ENCODE measurements at regions of chr16 and their contacts with region 1.

Region 1: DNA sequence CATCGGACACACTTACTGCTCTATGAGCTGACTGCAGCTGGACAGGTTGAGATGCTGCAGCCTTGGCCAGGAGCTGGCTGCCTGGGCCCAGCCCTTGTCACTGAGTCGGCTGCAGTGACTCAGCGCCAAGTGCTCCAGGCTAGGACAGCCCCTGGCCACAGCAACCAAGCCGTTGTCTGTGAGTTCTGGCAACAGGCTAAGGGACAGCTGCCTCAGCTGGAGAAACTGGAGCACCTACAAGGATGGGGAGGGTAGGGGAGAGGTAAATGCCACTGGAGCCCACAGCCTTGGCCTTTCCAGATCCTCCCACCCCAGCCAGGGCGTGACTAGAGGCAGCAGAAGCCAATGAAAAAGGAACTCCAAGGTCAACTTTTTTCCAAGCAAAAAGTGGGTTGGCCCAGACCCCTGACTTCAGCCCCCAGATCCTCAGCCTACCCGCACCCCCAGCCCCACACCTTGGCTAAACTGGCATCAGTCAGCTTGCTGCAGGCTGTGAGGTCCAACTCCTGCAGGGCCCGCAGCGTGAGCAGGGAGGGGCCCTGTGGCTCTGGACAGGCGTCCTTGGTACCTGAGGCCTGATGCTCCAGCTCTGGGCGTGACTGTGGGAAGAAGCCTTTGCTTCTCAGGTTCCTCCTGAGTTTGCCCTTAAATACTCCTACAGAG is 9.1 kb downstream of the ELMO3 start:
- DNase-seq: peak; percentile 32 to 53
- ATAC-seq: peak; percentile 49 to 56
- H3K4me3 ChIP-seq: no peak overlapping the region
- H3K27ac ChIP-seq: peak overlapping the region; percentile 38 to 73; a peak in 4 of 6 replicates
- H3K4me1 ChIP-seq: peaks cover 22% of the 10 kb centered on the region
- CTCF ChIP-seq: no peak
- EP300 ChIP-seq: no peak
- POLR2A ChIP-seq: no peak
- RAD21 ChIP-seq: no peak

Region 2: GRCh38 chr16:67191995-67192681 is 15.8 kb before region 1 on chr16 and contains the start of gene E2F4:
- CTCF ChIA-PET with region 1: interaction called, 105 read pairs
- POLR2A ChIA-PET with region 1: no interaction called
- DNase-seq: peak; percentile 90 to 92
- ATAC-seq: peak; percentile 96 to 98
- H3K4me3 ChIP-seq: peak within 1 kb of the TSS; percentile 95
- H3K27ac ChIP-seq: peak within 1 kb of the TSS; percentile 97
- H3K4me1 ChIP-seq: peaks cover 16% of the 10 kb centered on the region
- CTCF ChIP-seq: no peak
- EP300 ChIP-seq: no peak
- POLR2A ChIP-seq: peak; percentile 71
- RAD21 ChIP-seq: no peak
- polyA plus RNA-seq, gene E2F4: 65.1 and 71.8 TPM in 2 replicates

Region 3: DNA sequence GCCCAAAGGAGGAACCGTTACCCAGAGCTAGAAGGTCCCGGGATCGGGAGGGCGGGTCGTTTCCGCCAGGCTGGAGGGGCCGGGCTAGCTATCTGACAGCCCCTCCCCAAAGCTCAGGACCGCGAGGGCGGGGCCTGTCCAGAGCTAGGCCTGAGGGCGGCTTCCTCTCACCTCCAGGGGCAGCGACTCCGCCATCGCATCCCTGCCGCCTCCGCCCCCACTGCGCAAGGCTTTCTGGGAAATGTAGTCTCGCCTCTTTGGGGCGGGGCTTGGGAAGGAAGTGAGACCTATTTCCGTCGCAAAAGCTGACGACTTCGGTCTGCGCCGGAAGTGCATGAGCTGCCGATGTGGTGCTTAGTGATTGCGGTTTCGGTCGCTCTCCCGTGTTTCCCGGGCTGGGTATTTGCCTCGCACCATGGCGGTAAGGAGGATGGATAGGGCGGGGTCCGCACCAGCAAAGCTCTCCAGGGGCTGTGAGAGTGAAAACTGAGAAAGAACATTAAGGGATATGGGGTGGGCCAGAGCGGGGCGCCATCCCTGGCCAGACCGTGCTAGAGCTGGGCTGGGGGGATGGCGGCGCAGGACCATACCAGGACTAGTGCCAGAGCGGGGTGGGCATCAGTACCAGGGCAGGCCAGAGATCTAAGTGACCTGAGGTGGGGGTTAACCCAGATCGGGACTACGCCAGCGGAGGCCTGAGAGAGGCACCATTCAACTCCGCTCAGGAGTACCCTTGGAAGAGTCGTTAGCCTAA is 19.0 kb after region 1 on chr16 and contains the start of gene TMEM208:
- CTCF ChIA-PET with region 1: interaction called, 10 read pairs
- POLR2A ChIA-PET with region 1: interaction called, 11 read pairs
- DNase-seq: peak; percentile 92 to 98
- ATAC-seq: peak; percentile 87 to 97
- H3K4me3 ChIP-seq: peak within 1 kb of the TSS; percentile 83
- H3K27ac ChIP-seq: peak within 1 kb of the TSS; percentile 89 to 95
- H3K4me1 ChIP-seq: peaks cover 13% of the 10 kb centered on the region
- CTCF ChIP-seq: peak; percentile 36; the same call in 1 of the 3 replicates
- EP300 ChIP-seq: no peak
- POLR2A ChIP-seq: no peak; the same call in 1 of the 2 replicates
- RAD21 ChIP-seq: no peak
- polyA plus RNA-seq, gene TMEM208: 70.2 and 73.5 TPM in 2 replicates

Region 4: GRCh38 chr16:67296422-67296821 is 88.4 kb after region 1 on chr16:
- CTCF ChIA-PET with region 1: no interaction called
- POLR2A ChIA-PET with region 1: no interaction called
- DNase-seq: no peak
- ATAC-seq: no peak
- H3K4me3 ChIP-seq: no peak overlapping the region
- H3K27ac ChIP-seq: no peak overlapping the region
- H3K4me1 ChIP-seq: no peaks in the 10 kb centered on the region
- CTCF ChIP-seq: no peak
- EP300 ChIP-seq: no peak
- POLR2A ChIP-seq: no peak
- RAD21 ChIP-seq: no peak

Measured in A549 (cell line).